AG04449 (cell line): ENCODE measurements at regions of chr11 and their contacts with region 1.

Region 1: GRCh38 chr11:107799218-107799859 is 59.2 kb downstream of the SLC35F2 start:
- DNase-seq: no peak
- H3K4me3 ChIP-seq: no peak overlapping the region
- CTCF ChIP-seq: peak; percentile 80

Region 2: GRCh38 chr11:107819361-107820014 is 20.1 kb after region 1 on chr11:
- CTCF ChIA-PET with region 1: interaction called, 17 read pairs
- POLR2A ChIA-PET with region 1: no interaction called
- DNase-seq: no peak
- H3K4me3 ChIP-seq: no peak overlapping the region
- CTCF ChIP-seq: no peak